Activated CD4-positive, alpha-beta T cell treated with anti-CD3 and anti-CD28 coated beads, Interleukin-2, amount 10 ng/mL, durations not matched to agents 7 days and 5 days (primary cell): ENCODE measurements at regions of chr6 and their contacts with region 1.

Region 1: GRCh38 chr6:31559958-31560696 is 12.0 kb upstream of the LTA start:
- DNase-seq: peak; percentile 66
- H3K4me3 Mint-ChIP-seq: peak overlapping the region; percentile 62
- H3K27ac Mint-ChIP-seq: peak overlapping the region; percentile 89
- H3K4me1 Mint-ChIP-seq: peaks cover 73% of the 10 kb centered on the region
- H3K27me3 Mint-ChIP-seq: peaks cover 21% of the 10 kb centered on the region

Region 2: GRCh38 chr6:31332637-31333602 is 227.2 kb before region 1 on chr6:
- CTCF ChIA-PET with region 1: no interaction called
- POLR2A ChIA-PET with region 1: no interaction called
- DNase-seq: peak; percentile 59
- H3K4me3 Mint-ChIP-seq: peak overlapping the region; percentile 1
- H3K27ac Mint-ChIP-seq: no peak overlapping the region
- H3K4me1 Mint-ChIP-seq: peaks cover 19% of the 10 kb centered on the region
- H3K27me3 Mint-ChIP-seq: peaks cover 6% of the 10 kb centered on the region

Region 3: DNA sequence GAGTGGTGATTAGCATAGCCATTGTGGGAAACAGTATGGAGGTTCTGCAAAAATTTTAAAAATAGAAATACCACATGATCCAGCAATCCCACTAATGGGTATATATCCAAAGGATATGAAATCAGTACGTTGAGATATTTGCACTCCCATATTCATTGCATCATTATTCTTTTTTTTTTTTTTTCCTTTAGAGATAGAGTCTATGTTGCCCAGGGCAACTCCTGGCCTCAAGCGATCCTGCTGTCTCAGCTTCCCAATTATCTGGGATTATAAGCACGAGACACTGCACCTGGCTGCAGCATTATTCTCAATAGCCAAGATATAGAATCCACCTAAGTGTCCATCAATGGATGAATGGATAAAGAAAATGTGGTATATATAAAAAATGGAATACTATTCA is 38.3 kb before region 1 on chr6:
- CTCF ChIA-PET with region 1: no interaction called
- POLR2A ChIA-PET with region 1: no interaction called
- DNase-seq: no peak
- H3K4me3 Mint-ChIP-seq: no peak overlapping the region
- H3K27ac Mint-ChIP-seq: no peak overlapping the region
- H3K4me1 Mint-ChIP-seq: no peaks in the 10 kb centered on the region
- H3K27me3 Mint-ChIP-seq: peaks cover 22% of the 10 kb centered on the region

Region 4: GRCh38 chr6:31575335-31575901 is 15.3 kb after region 1 on chr6 and contains the start of gene TNF:
- CTCF ChIA-PET with region 1: interaction called, 32 read pairs
- POLR2A ChIA-PET with region 1: interaction called, 8 read pairs
- DNase-seq: peak; percentile 82
- H3K4me3 Mint-ChIP-seq: peak within 1 kb of the TSS; percentile 90
- H3K27ac Mint-ChIP-seq: peak within 1 kb of the TSS; percentile 88
- H3K4me1 Mint-ChIP-seq: peaks cover 90% of the 10 kb centered on the region
- H3K27me3 Mint-ChIP-seq: no peaks in the 10 kb centered on the region
- total RNA-seq, gene TNF: 46.5 to 47.1 TPM

Region 5: DNA sequence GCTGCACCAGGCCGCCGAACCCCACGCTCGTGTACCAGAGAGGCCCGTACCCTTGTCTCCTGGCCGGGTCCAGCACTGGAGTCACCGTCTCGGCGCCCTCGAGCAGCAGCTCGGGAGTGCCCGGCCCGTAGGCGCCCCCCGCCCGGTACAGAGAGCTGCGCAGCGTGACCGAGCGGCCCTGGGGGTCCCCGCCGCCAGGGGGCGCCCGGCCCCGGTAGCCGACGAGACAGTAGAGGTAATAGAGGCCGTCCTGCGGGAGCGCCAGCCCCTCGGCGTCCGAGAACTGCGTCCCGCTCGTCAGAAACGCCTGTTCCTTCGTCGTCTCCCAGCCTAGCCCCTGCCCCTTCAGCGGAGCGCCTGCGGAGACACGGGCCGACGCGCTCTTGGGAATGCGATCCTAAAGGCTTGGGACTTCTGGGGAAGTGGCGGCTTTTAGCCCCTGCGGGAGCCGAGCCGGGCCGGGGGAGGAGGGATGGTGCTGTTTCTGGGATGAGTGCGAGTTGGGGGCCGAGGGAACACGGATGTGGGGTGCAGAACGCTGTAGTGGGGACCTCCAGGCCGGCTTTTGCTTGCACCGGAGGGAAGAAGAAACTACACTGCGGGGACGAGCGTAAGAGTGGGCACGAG is 20.8 kb after region 1 on chr6:
- CTCF ChIA-PET with region 1: interaction called, 32 read pairs
- POLR2A ChIA-PET with region 1: interaction called, 8 read pairs
- DNase-seq: peak; percentile 88
- H3K4me3 Mint-ChIP-seq: peak overlapping the region; percentile 94
- H3K27ac Mint-ChIP-seq: peak overlapping the region; percentile 94
- H3K4me1 Mint-ChIP-seq: peaks cover 73% of the 10 kb centered on the region
- H3K27me3 Mint-ChIP-seq: no peaks in the 10 kb centered on the region

Region 6: DNA sequence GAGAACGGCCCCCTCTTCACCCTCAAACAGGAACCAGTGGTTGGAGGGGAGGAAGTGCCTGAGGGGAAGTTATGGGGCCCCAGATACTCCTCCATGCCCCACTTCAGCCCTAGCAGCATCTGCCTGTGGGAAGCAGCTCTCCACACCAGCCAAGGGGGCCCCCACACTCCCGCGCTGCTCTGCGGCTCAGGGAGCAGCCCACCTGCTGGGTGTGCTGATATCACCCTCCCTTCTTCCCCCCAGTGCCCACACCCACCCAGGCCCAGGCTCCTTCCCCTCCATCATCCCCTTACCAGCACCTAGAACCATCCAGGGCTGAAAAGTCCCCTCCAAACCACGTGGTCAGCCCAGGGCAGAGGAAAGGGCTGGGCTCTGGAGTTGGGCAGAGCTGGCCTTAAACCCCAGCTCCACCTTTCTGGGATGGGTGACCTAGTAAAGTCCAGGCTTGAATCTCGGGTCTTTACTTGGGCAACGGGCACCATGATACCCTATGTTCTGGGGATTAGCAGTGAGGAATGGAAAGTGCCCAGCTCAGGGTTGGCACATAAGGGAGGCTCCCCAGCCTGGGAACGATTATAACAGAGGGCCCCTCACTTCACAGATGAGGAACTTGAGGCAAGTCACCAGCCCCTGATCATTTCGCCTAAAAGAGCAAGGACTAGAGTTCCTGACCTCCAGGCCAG is 26.6 kb after region 1 on chr6:
- CTCF ChIA-PET with region 1: interaction called, 497 read pairs
- POLR2A ChIA-PET with region 1: interaction called, 5 read pairs
- DNase-seq: peak; percentile 37
- H3K4me3 Mint-ChIP-seq: peak overlapping the region; percentile 54
- H3K27ac Mint-ChIP-seq: peak overlapping the region; percentile 94
- H3K4me1 Mint-ChIP-seq: peaks cover 70% of the 10 kb centered on the region
- H3K27me3 Mint-ChIP-seq: no peaks in the 10 kb centered on the region